Ovary (tissue), 10 donors: ENCODE measurements at regions of chr17 and their contacts with region 1.

Region 1: GRCh38 chr17:39244600-39245570 is 19.1 kb upstream of the STAC2 start:
- DNase-seq: peak; percentile 76 to 90 (median 88)
- H3K4me3 ChIP-seq: no peak overlapping the region
- H3K27ac ChIP-seq: no peak overlapping the region
- H3K4me1 ChIP-seq: no peaks in the 10 kb centered on the region
- H3K27me3 ChIP-seq: no peaks in the 10 kb centered on the region
- CTCF ChIP-seq: peak; percentile 76 to 89 (median 88)
- EP300 ChIP-seq: no peak
- POLR2A ChIP-seq: no peak

Region 2: GRCh38 chr17:38967290-38967738 is 277.6 kb before region 1 on chr17 and contains the start of gene FBXO47:
- intact Hi-C with region 1: loop called in 1 of 4 experiments (anchors 10 kb)
- DNase-seq: peak; percentile 89 to 93 (median 92)
- H3K4me3 ChIP-seq: no peak within 1 kb of the TSS
- H3K27ac ChIP-seq: peak within 1 kb of the TSS; percentile 36 to 55
- H3K4me1 ChIP-seq: no peaks in the 10 kb centered on the region
- H3K27me3 ChIP-seq: no peaks in the 10 kb centered on the region
- CTCF ChIP-seq: peak in 2 of 3 donors; percentile 13 to 37
- EP300 ChIP-seq: no peak
- POLR2A ChIP-seq: peak; percentile 37
- total RNA-seq, gene FBXO47: not detected

Region 3: DNA sequence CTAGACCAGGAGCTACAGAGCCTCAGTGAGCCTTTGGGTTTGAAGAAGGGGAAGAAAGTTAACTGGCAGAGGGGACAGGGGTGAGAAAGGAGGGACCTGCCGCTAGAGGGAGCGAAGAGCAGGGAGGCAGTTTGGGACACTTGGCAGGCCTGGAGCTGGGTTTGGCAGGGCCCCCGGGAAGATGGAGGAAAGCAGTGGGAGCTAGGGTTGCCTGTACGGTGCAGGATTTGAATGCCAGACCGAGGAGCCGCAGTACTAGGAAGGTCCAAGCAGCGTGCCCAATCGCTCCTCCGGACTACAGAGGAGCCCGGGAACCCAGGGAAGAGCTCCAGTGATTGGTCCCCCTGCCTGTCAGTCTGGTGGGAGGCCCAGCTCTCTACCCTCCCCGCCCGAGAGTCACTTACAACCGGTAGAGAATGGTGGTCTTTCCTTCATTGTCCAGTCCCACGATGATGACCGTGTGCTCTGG is 80.2 kb before region 1 on chr17:
- intact Hi-C with region 1: loop called in 2 of 4 experiments (anchors 5 kb)
- DNase-seq: peak; percentile 70 to 86 (median 83)
- H3K4me3 ChIP-seq: peak overlapping the region; percentile 43
- H3K27ac ChIP-seq: no peak overlapping the region
- H3K4me1 ChIP-seq: no peaks in the 10 kb centered on the region
- H3K27me3 ChIP-seq: no peaks in the 10 kb centered on the region
- CTCF ChIP-seq: peak; percentile 28 to 55 (median 47)
- EP300 ChIP-seq: no peak
- POLR2A ChIP-seq: no peak

Region 4: GRCh38 chr17:39199820-39200069 is 45.1 kb before region 1 on chr17:
- intact Hi-C with region 1: loop called in 1 of 4 experiments (anchors 10 kb)
- DNase-seq: peak; percentile 84 to 92 (median 89)
- H3K4me3 ChIP-seq: peak overlapping the region; percentile 73
- H3K27ac ChIP-seq: peak overlapping the region; percentile 93 to 97
- H3K4me1 ChIP-seq: peaks cover 12% of the 10 kb centered on the region
- H3K27me3 ChIP-seq: no peaks in the 10 kb centered on the region
- CTCF ChIP-seq: no peak
- EP300 ChIP-seq: no peak
- POLR2A ChIP-seq: peak; percentile 42

Region 5: DNA sequence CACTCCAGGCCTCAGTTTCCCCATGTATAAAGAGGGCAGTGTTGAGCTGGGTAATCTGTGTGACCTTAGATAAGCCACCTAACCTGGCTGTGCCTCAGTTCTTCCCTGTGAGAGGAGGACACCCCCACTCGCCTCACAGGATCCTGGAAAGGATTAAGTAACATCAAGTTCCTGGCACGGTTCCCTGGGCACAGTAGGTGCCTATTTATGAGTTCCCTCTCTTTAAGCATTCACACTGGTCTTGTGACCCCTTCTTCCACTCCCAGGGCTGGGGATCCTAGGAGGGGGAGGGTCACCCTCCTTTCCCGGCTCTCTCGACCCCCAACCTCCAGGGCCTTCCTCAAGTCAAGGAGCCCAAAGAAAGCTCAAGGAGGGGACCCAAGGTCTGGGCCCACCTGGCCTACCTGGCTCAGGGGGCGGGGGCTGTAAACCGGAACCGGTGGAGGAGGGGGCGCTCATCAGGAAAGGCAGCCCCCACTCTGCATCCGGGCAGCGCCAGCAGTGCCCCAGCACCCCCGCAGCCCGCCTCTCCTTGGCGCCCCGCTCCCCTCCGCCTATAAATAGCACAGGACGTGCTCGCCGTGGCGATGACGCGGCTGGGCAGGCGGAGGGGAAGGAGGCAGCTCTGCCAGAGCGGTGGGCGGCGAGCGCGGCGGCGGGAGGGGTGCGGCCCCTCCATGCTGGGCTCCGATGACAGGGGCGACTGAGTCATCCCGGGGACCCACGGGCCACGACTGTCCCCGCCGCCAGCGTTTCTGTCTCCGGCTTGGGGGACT is 35.4 kb before region 1 on chr17:
- intact Hi-C with region 1: loop called in 3 of 4 experiments (anchors 2 to 5 kb)
- DNase-seq: peak; percentile 79 to 89 (median 83)
- H3K4me3 ChIP-seq: peak overlapping the region; percentile 29
- H3K27ac ChIP-seq: no peak overlapping the region
- H3K4me1 ChIP-seq: peaks cover 4% of the 10 kb centered on the region
- H3K27me3 ChIP-seq: no peaks in the 10 kb centered on the region
- CTCF ChIP-seq: no peak
- EP300 ChIP-seq: no peak
- POLR2A ChIP-seq: no peak

Region 6: GRCh38 chr17:39485555-39485954 is 240.7 kb after region 1 on chr17:
- intact Hi-C with region 1: no loop called
- DNase-seq: no peak
- H3K4me3 ChIP-seq: no peak overlapping the region
- H3K27ac ChIP-seq: no peak overlapping the region
- H3K4me1 ChIP-seq: peaks cover 3% of the 10 kb centered on the region
- H3K27me3 ChIP-seq: no peaks in the 10 kb centered on the region
- CTCF ChIP-seq: no peak
- EP300 ChIP-seq: no peak
- POLR2A ChIP-seq: no peak